ENCODE measurements at regions of chr1 and their contacts with region 1.

Region 1: GRCh38 chr1:92623187-92623778 is 136.6 kb upstream of the GFI1 start:
- DNase-seq: no peak
- H3K4me3 Mint-ChIP-seq: no peak overlapping the region
- H3K27ac Mint-ChIP-seq: no peak overlapping the region
- H3K4me1 Mint-ChIP-seq: peaks cover 5% of the 10 kb centered on the region
- H3K27me3 Mint-ChIP-seq: peaks cover 13% of the 10 kb centered on the region

Region 2: GRCh38 chr1:92310185-92310597 is 313.1 kb before region 1 on chr1:
- intact Hi-C with region 1: loop called (anchors 1 kb)
- DNase-seq: no peak
- H3K4me3 Mint-ChIP-seq: no peak overlapping the region
- H3K27ac Mint-ChIP-seq: no peak overlapping the region
- H3K4me1 Mint-ChIP-seq: peaks cover 39% of the 10 kb centered on the region
- H3K27me3 Mint-ChIP-seq: no peaks in the 10 kb centered on the region

Region 3: DNA sequence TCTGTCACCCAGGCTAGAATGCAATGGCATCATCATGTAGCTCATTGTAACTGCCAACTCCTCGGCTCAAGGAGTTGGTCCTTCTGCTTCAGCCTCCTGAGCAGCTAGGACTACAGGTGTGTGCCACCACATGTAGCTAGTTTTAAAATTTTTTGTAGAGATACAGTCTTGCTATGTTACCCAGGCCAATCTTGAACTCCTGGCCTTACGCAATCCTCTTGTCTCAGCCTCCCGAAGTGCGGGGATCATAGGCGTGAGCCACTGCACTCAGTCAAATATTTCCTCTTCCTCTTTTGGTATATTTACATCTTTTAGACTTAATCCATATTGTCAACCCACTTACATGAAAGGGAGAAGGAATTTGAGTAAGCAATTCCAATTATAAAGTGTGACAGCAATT is 40.5 kb after region 1 on chr1:
- intact Hi-C with region 1: no loop called
- DNase-seq: no peak
- H3K4me3 Mint-ChIP-seq: no peak overlapping the region
- H3K27ac Mint-ChIP-seq: no peak overlapping the region
- H3K4me1 Mint-ChIP-seq: no peaks in the 10 kb centered on the region
- H3K27me3 Mint-ChIP-seq: peaks cover 23% of the 10 kb centered on the region